ENCODE measurements at regions of chr15 and their contacts with region 1.

Region 1: DNA sequence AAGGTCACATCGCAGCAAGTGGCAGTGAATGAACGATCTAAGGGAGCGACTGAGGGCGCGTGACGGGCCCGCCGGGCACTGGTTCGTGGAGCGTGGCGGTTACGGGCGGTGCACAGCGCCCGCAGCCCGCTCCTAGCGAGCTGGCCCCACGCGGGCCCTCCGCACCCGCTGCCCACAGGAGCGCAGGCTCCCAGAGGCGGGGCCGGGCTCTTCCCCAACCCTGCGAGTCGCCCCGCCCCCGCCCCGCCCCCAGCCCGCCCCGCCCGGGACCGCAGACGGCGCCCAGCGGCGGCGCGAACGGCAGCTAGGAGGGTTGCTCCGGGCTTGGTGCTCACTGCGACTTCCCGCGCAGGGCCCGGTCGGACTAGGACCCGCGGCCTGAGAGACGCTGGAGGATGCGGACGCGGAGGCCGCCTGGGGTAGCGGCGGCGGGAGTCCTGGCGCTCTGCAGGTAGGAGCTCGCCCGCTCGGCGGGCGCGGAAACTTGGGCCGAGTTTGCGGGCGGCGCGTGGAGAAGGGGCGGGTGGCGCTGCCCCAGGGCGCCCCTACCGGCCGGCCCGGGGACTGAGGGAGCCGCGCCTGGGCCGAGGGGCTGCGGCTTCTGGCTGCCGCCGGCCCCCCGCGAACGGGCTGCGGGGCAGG is at the start of gene C15orf39:
- DNase-seq: peak; percentile 68
- H3K4me3 Mint-ChIP-seq: peak within 1 kb of the TSS; percentile 87
- H3K27ac Mint-ChIP-seq: peak within 1 kb of the TSS; percentile 83
- H3K4me1 Mint-ChIP-seq: peaks cover 41% of the 10 kb centered on the region
- H3K27me3 Mint-ChIP-seq: no peaks in the 10 kb centered on the region
- total RNA-seq, gene C15orf39: 7.4 to 8.7 TPM

Region 2: DNA sequence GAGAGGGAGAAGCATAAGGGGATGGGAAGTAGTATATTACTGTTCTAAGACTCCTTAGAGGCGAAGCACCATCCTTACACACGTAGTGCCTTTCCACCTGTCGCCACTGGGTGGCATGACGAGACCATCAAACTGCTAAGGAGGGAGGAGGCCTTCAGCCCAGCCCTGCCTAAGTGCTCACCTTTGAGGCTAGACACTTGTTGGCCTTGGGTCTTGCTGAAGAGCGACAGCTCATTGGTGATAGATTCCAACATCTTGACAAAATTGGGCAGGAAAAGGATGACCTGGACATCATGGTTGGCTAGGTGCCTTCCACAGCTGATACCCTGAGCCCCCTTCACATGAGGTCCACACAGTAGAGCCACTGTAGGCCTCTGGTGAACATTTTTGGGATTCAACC is 566.5 kb before region 1 on chr15:
- CTCF ChIA-PET with region 1: no interaction called
- intact Hi-C with region 1: loop called (anchors 5 kb)
- DNase-seq: peak; percentile 86
- H3K4me3 Mint-ChIP-seq: no peak overlapping the region
- H3K27ac Mint-ChIP-seq: no peak overlapping the region
- H3K4me1 Mint-ChIP-seq: no peaks in the 10 kb centered on the region
- H3K27me3 Mint-ChIP-seq: no peaks in the 10 kb centered on the region

Region 3: GRCh38 chr15:74906446-74907162 is 295.1 kb before region 1 on chr15 and contains the start of gene FAM219B:
- CTCF ChIA-PET with region 1: interaction called, 3 read pairs
- intact Hi-C with region 1: loop called (anchors 1 kb)
- DNase-seq: peak; percentile 88
- H3K4me3 Mint-ChIP-seq: peak within 1 kb of the TSS; percentile 89
- H3K27ac Mint-ChIP-seq: peak within 1 kb of the TSS; percentile 92
- H3K4me1 Mint-ChIP-seq: peaks cover 28% of the 10 kb centered on the region
- H3K27me3 Mint-ChIP-seq: no peaks in the 10 kb centered on the region
- total RNA-seq, gene FAM219B: 60.3 to 63.0 TPM

Region 4: GRCh38 chr15:74988007-74988800 is 213.5 kb before region 1 on chr15:
- CTCF ChIA-PET with region 1: no interaction called
- intact Hi-C with region 1: no loop called
- DNase-seq: peak; percentile 73
- H3K4me3 Mint-ChIP-seq: no peak overlapping the region
- H3K27ac Mint-ChIP-seq: no peak overlapping the region
- H3K4me1 Mint-ChIP-seq: peaks cover 11% of the 10 kb centered on the region
- H3K27me3 Mint-ChIP-seq: peaks cover 6% of the 10 kb centered on the region

Region 5: GRCh38 chr15:75023181-75023871 is 178.4 kb before region 1 on chr15 and contains the start of gene PPCDC:
- CTCF ChIA-PET with region 1: interaction called, 9 read pairs
- intact Hi-C with region 1: loop called (anchors 1 kb)
- DNase-seq: peak; percentile 98
- H3K4me3 Mint-ChIP-seq: peak within 1 kb of the TSS; percentile 90
- H3K27ac Mint-ChIP-seq: peak within 1 kb of the TSS; percentile 90
- H3K4me1 Mint-ChIP-seq: peaks cover 16% of the 10 kb centered on the region
- H3K27me3 Mint-ChIP-seq: no peaks in the 10 kb centered on the region
- total RNA-seq, gene PPCDC: 17.5 to 18.0 TPM

Region 6: GRCh38 chr15:75104804-75105535 is 96.8 kb before region 1 on chr15:
- CTCF ChIA-PET with region 1: interaction called, 5 read pairs
- intact Hi-C with region 1: loop called (anchors 1 kb)
- DNase-seq: peak; percentile 44
- H3K4me3 Mint-ChIP-seq: no peak overlapping the region
- H3K27ac Mint-ChIP-seq: no peak overlapping the region
- H3K4me1 Mint-ChIP-seq: peaks cover 24% of the 10 kb centered on the region
- H3K27me3 Mint-ChIP-seq: peaks cover 10% of the 10 kb centered on the region

Measured in activated naive CD4-positive, alpha-beta T cell treated with anti-CD3 and anti-CD28 coated beads for 36 hours (primary cell).